Activated T-helper 1 cell treated with anti-CD3 and anti-CD28 coated beads, Interleukin-12 subunit alpha, Interleukin-12 subunit beta, Interleukin-2, Interleukin-4 antibody, amounts not matched to agents 30 ng/mL and 10 ng/mL and 1 ng/mL, durations not matched to agents 14 hours and 24 hours and 36 hours (primary cell): ENCODE measurements at regions of chrX and their contacts with region 1.

Region 1: GRCh38 chrX:16436348-16437188 is 213.4 kb upstream of the S100G start:
- DNase-seq: peak; percentile 14
- H3K4me3 Mint-ChIP-seq: no peak overlapping the region
- H3K27ac Mint-ChIP-seq: no peak overlapping the region
- H3K4me1 Mint-ChIP-seq: peaks cover 12% of the 10 kb centered on the region
- H3K27me3 Mint-ChIP-seq: no peaks in the 10 kb centered on the region

Region 2: GRCh38 chrX:16394290-16394689 is 42.3 kb before region 1 on chrX:
- intact Hi-C with region 1: no loop called
- DNase-seq: no peak
- H3K4me3 Mint-ChIP-seq: no peak overlapping the region
- H3K27ac Mint-ChIP-seq: no peak overlapping the region
- H3K4me1 Mint-ChIP-seq: no peaks in the 10 kb centered on the region
- H3K27me3 Mint-ChIP-seq: peaks cover 4% of the 10 kb centered on the region

Region 3: GRCh38 chrX:16670998-16671397 is 234.4 kb after region 1 on chrX:
- intact Hi-C with region 1: loop called (anchors 1 kb)
- DNase-seq: no peak
- H3K4me3 Mint-ChIP-seq: no peak overlapping the region
- H3K27ac Mint-ChIP-seq: no peak overlapping the region
- H3K4me1 Mint-ChIP-seq: peaks cover 5% of the 10 kb centered on the region
- H3K27me3 Mint-ChIP-seq: no peaks in the 10 kb centered on the region

Region 4: GRCh38 chrX:16695079-16695676 is 258.6 kb after region 1 on chrX:
- intact Hi-C with region 1: loop called (anchors 1 kb)
- DNase-seq: peak; percentile 25
- H3K4me3 Mint-ChIP-seq: no peak overlapping the region
- H3K27ac Mint-ChIP-seq: no peak overlapping the region
- H3K4me1 Mint-ChIP-seq: no peaks in the 10 kb centered on the region
- H3K27me3 Mint-ChIP-seq: no peaks in the 10 kb centered on the region